Colonic mucosa (tissue), 4 donors: ENCODE measurements at regions of chr17 and their contacts with region 1.

Region 1: GRCh38 chr17:62109378-62109902 is 44.4 kb upstream of the MED13 start:
- DNase-seq: peak; percentile 73
- H3K4me3 ChIP-seq: no peak overlapping the region
- H3K27ac ChIP-seq: no peak overlapping the region
- H3K4me1 ChIP-seq: peaks cover 4% of the 10 kb centered on the region
- H3K27me3 ChIP-seq: no peaks in the 10 kb centered on the region
- CTCF ChIP-seq: peak; percentile 72

Region 2: DNA sequence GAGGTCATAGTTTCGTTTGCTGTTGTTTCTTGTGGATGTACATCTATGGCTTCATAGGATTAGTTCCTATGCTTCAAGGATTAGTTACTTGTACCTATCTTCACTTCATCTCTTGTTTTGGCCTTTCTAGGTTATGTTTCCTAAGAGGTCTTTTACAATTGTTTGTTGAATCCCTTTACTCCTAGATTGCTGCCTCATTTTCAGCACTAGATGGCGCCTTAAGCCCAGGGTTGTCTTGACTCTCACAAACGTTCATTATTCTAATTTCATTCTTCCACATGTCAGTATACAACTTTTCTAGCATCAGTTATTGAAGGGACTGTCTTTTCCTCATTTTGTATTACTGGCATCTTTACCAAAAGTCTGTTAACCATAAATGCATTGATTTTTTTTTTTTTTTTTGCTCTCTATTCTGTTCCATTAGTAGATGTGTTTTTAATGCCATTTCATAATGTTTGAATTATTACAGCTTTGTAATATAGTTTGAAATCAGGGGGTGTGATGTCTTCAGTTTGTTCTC is 473.5 kb before region 1 on chr17:
- intact Hi-C with region 1: loop called (anchors 10 kb)
- DNase-seq: peak; percentile 51
- H3K4me3 ChIP-seq: no peak overlapping the region
- H3K27ac ChIP-seq: no peak overlapping the region
- H3K4me1 ChIP-seq: no peaks in the 10 kb centered on the region
- H3K27me3 ChIP-seq: no peaks in the 10 kb centered on the region
- CTCF ChIP-seq: peak; percentile 68

Region 3: DNA sequence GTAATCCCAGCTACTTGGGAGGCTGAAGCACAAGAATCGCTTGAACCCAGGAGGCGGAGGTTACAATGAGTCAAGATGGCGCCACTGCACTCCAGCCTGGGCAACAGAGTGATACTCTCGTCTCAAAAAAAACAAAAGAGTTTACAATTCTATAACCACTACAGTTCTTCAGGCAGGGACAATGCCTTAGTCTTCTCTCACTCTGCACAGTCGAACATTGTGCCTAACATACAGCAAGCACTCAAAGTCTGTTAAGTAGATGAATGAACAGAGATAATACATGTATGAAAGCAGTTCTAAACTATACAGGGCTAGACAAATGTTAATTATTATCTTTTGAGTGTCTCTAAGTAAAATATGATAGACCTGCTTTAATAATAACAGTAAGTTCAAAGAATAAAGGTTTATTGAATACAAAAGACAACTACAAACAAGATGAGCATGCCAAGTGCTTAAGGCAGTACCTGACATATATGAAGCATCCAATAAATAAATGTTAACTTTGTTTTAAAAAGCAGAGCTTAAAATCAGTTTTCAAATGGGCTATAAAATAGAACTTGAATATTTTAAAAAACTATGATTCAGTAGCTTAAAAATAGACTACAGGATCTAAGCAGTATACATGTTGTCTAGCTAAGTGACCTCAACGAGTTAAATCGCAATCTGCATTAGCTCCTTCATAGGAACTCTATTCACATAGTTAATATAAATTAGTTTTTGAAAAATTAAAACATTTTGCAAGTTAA is 201.0 kb before region 1 on chr17:
- intact Hi-C with region 1: no loop called
- DNase-seq: no peak
- H3K4me3 ChIP-seq: no peak overlapping the region
- H3K27ac ChIP-seq: no peak overlapping the region
- H3K4me1 ChIP-seq: no peaks in the 10 kb centered on the region
- H3K27me3 ChIP-seq: no peaks in the 10 kb centered on the region
- CTCF ChIP-seq: no peak

Region 4: DNA sequence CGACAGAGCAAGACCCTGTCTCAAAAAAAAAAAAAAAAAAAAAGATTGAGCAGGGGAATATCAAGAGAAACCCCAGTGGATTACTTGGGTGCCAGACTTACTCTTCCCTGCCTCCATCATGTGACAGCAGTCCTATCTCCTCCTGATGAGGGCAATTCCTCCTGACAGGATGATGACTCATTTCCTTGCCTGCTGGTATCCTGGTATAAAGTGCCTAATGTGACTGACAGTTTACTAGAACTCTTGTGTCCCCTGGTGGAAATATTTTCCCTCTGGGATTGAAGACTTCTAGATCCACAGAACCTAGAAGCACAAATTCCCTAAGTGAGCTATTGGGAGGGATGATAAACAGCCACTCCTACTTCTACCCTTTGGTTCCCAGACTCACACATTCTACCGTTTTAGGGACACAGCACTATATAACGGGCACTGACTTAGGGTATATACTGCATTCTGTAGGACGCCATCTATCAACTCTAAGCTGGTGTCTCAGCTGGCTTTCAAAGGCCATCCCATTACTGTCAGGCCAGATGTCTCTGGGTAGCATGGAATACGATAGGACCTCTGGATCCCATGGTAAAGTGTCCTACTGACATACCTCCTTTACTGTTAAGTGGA is 70.2 kb after region 1 on chr17:
- intact Hi-C with region 1: loop called (anchors 10 kb)
- DNase-seq: peak; percentile 48
- H3K4me3 ChIP-seq: no peak overlapping the region
- H3K27ac ChIP-seq: peak overlapping the region; percentile 27
- H3K4me1 ChIP-seq: no peaks in the 10 kb centered on the region
- H3K27me3 ChIP-seq: no peaks in the 10 kb centered on the region
- CTCF ChIP-seq: peak; percentile 32